Activated T-helper 1 cell treated with anti-CD3 and anti-CD28 coated beads, Interleukin-12 subunit alpha, Interleukin-12 subunit beta, Interleukin-2, Interleukin-4 antibody, amounts not matched to agents 30 ng/mL and 10 ng/mL and 1 ng/mL, durations not matched to agents 14 hours and 24 hours and 36 hours (primary cell): ENCODE measurements at regions of chr17 and their contacts with region 1.

Region 1: DNA sequence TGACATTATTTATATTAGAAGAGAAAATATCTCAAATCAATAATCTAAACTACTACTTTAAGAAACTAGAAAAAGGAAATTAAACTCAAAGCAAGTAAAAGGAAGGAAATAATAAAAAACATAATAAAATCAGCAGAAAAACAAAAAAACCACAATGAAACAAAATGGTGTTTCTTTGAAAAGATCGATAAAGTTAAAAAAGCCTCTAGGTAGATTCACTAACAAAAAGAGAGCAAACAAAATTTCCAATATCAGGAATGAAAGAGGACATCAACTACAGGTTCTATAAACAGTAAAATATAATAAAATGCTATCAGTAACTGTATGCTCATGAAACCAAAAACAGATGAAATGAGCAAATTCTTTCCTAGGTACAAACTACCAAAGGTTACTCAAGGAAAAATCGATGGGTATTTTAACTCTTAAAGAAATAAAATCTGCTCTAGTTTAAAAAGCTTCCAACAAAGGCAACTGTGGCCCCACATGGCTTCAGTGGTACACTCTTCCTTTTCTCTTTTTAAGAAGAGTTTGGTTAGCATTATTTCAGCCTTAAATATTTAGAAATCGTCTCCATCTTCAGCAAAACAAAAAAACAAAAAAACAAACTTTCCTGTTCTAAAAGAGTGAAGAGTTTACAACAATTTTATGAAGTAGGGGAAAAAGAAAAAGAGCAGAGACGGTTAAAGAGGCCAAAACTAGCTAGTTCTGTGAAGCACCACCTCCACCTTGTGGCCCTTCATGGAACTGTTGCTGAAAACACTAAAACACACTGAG is 102.2 kb downstream of the TRIM37 start:
- DNase-seq: peak; percentile 44
- H3K4me3 Mint-ChIP-seq: peak overlapping the region; percentile 46
- H3K27ac Mint-ChIP-seq: peak overlapping the region; percentile 61
- H3K4me1 Mint-ChIP-seq: peaks cover 22% of the 10 kb centered on the region
- H3K27me3 Mint-ChIP-seq: no peaks in the 10 kb centered on the region

Region 2: GRCh38 chr17:58587702-58588254 is 416.7 kb before region 1 on chr17:
- intact Hi-C with region 1: loop called (anchors 1 kb)
- DNase-seq: peak; percentile 15
- H3K4me3 Mint-ChIP-seq: no peak overlapping the region
- H3K27ac Mint-ChIP-seq: no peak overlapping the region
- H3K4me1 Mint-ChIP-seq: no peaks in the 10 kb centered on the region
- H3K27me3 Mint-ChIP-seq: peaks cover 2% of the 10 kb centered on the region

Region 3: GRCh38 chr17:58703137-58703972 is 301.2 kb before region 1 on chr17:
- intact Hi-C with region 1: loop called (anchors 1 kb)
- DNase-seq: no peak
- H3K4me3 Mint-ChIP-seq: no peak overlapping the region
- H3K27ac Mint-ChIP-seq: peak overlapping the region; percentile 89
- H3K4me1 Mint-ChIP-seq: peaks cover 48% of the 10 kb centered on the region
- H3K27me3 Mint-ChIP-seq: no peaks in the 10 kb centered on the region

Region 4: DNA sequence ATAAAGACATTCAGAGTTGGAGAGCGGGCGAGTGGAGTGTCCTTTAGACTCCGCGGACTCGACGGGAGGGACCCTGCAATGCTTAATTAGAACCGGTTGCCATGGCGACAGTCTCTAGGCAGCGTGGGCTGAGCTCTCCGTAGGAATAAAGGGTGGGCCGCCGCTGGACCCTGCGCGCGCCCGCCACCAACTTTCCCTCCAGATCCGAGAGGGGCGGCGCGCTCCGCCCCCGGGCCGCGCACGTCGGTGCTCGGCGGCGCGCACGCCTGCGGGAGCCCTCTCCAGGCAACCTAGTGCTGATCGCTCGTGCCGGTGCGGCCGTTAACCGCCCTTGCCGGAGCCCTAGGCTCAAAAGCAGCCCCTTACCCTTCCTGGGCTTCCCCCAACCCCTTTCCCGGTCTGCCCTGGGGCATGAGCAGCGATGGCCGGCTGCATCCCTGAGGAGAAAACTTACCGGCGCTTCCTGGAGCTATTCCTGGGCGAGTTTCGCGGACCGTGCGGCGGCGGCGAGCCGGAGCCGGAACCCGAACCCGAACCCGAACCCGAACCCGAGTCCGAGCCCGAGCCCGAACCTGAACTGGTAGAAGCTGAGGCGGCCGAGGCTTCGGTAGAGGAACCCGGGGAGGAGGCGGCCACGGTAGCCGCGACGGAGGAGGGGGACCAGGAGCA is 248.8 kb before region 1 on chr17 and contains the start of gene PPM1E:
- intact Hi-C with region 1: loop called (anchors 2 kb)
- DNase-seq: peak; percentile 45
- H3K4me3 Mint-ChIP-seq: peak within 1 kb of the TSS; percentile 92
- H3K27ac Mint-ChIP-seq: peak within 1 kb of the TSS; percentile 52
- H3K4me1 Mint-ChIP-seq: peaks cover 12% of the 10 kb centered on the region
- H3K27me3 Mint-ChIP-seq: peaks cover 61% of the 10 kb centered on the region
- total RNA-seq, gene PPM1E: 0.03 TPM in 1 of 2 replicates, not detected in the other